Transverse colon (tissue), 4 donors: ENCODE measurements at regions of chr12 and their contacts with region 1.

Region 1: GRCh38 chr12:15151161-15152120 is 69.8 kb downstream of the RERG start:
- DNase-seq: no peak
- H3K4me3 ChIP-seq: no peak overlapping the region
- H3K27ac ChIP-seq: peak overlapping the region; percentile 54 to 64 (median 60)
- H3K4me1 ChIP-seq: peaks cover 7 to 44% (median 18%) of the 10 kb centered on the region in 4 donors
- H3K27me3 ChIP-seq: no peaks in the 10 kb centered on the region
- CTCF ChIP-seq: peak; percentile 41 to 51 (median 43)
- EP300 ChIP-seq: no peak
- POLR2A ChIP-seq: no peak

Region 2: GRCh38 chr12:15181017-15181683 is 29.7 kb after region 1 on chr12:
- in situ Hi-C with region 1: no loop called
- intact Hi-C with region 1: loop called (anchors 2 kb)
- DNase-seq: no peak
- H3K4me3 ChIP-seq: no peak overlapping the region
- H3K27ac ChIP-seq: peak overlapping the region; percentile 20 to 72 (median 42)
- H3K4me1 ChIP-seq: peaks cover 0 to 22% (median 1%) of the 10 kb centered on the region in 4 donors
- H3K27me3 ChIP-seq: no peaks in the 10 kb centered on the region
- CTCF ChIP-seq: no peak
- EP300 ChIP-seq: no peak
- POLR2A ChIP-seq: no peak

Region 3: DNA sequence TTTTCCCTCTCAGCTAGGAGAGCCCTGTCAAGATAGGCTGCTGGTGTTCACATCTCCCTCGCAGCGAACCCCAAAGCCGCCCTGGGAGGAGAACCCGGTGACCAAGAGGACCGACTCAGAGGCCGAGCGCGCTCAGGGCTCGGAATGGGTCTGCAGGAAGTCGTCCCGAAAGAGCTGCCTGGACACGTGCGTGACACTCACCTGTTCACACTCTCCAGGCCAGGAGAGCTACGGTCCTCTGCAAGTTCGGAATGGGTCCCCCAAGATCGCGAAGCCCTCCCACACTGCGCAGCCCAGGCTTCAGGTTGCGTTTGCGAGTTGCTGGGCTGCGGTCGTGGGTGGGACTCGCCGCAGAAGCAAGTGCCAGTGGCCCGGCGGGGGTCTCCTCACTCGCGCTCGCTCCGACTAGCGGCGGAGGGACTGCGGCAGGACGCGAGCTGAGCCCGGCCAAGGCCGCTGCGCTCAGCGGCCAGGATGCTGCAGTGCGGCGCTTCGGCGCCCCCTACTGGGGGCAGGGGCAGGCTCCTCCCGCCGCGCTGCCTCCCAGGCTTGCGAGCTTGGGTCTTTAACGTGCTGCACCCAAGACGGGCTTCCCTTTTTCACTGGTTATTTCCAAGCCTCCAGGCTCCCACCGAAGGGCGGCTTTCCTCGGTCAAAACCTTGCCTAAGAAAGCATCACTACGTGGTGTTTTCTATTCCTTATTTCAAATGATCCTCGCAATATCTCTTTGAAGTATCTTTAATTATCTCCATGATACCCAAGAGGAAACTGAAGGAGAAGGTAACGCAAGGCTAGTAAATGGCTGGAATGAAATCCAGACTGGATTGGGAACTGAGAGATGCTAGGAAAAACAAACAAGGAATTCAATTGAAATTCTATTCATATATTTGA is 69.8 kb after region 1 on chr12 and contains the start of gene RERG:
- in situ Hi-C with region 1: no loop called
- intact Hi-C with region 1: loop called (anchors 5 kb)
- DNase-seq: peak; percentile 79
- H3K4me3 ChIP-seq: peak within 1 kb of the TSS; percentile 6 to 59 (median 38)
- H3K27ac ChIP-seq: peak within 1 kb of the TSS; percentile 76 to 84 (median 79)
- H3K4me1 ChIP-seq: peaks cover 0 to 16% (median 8%) of the 10 kb centered on the region in 4 donors
- H3K27me3 ChIP-seq: peaks cover 10% of the 10 kb centered on the region
- CTCF ChIP-seq: peak; percentile 88 to 97 (median 97)
- EP300 ChIP-seq: no peak
- POLR2A ChIP-seq: no peak
- total RNA-seq, gene RERG: 3.6 to 12.6 (median 8.6) TPM